IMR-90 (cell line): ENCODE measurements at regions of chr10 and their contacts with region 1.

Region 1: DNA sequence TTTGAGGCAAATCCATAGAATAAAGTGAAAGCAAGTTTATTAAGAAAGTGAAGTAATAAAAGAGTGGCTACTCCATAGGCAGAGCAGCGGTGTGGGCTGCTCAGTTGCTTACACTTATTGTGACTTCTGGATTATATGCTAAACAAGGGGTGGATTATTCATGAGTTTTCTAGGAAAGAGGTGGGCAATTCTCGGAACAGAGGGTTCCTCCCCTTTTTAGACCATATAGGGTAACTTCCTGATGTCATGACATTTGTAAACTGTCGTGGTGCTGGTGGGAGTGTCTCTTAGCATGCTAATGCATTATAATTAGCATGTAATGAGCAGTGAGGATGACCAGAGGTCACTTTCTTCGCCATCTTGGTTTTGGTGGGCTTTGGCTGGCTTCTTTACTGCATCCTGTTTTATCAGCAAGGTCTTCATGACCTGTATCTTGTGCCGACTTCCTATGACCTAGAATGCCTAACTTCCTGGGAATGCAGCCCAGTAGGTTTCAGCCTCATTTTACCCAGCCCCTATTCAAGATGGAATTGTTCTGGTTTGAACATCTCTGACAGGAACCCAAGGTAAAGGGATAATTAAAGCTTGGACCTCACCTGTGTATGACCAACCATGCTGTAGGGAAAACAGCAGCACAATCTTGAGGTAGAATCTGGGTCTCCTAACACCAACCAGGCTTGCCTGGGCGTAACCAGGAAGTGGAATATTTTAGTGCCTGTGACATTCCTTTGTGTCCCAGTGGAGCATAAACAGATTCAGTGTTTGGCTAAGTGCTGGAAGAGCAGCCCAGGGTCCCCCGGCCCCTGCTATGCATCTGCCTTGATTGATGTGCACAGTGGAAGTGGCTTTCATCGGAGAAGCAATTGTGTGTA is 93.9 kb downstream of the PFKFB3 start:
- DNase-seq: no peak
- ATAC-seq: no peak
- H3K4me3 ChIP-seq: no peak overlapping the region
- H3K27ac ChIP-seq: no peak overlapping the region
- H3K4me1 ChIP-seq: peaks cover 7% of the 10 kb centered on the region; the same call in 1 of the 2 replicates
- H3K27me3 ChIP-seq: no peaks in the 10 kb centered on the region
- CTCF ChIP-seq: no peak
- POLR2A ChIP-seq: no peak
- RAD21 ChIP-seq: no peak

Region 2: GRCh38 chr10:4947635-4948596 is 1348.7 kb before region 1 on chr10:
- CTCF ChIA-PET with region 1: no interaction called
- POLR2A ChIA-PET with region 1: interaction called, 22 read pairs
- dilution Hi-C with region 1: no loop called
- in situ Hi-C with region 1: no loop called
- intact Hi-C with region 1: no loop called
- DNase-seq: peak; percentile 97
- ATAC-seq: peak; percentile 80
- H3K4me3 ChIP-seq: no peak overlapping the region
- H3K27ac ChIP-seq: peak overlapping the region; percentile 94
- H3K4me1 ChIP-seq: peaks cover 22% of the 10 kb centered on the region
- H3K27me3 ChIP-seq: no peaks in the 10 kb centered on the region
- CTCF ChIP-seq: no peak
- POLR2A ChIP-seq: no peak
- RAD21 ChIP-seq: no peak

Region 3: GRCh38 chr10:6319119-6319518 is 22.5 kb after region 1 on chr10:
- CTCF ChIA-PET with region 1: no interaction called
- POLR2A ChIA-PET with region 1: no interaction called
- dilution Hi-C with region 1: no loop called
- in situ Hi-C with region 1: no loop called
- intact Hi-C with region 1: loop called (anchors 1 kb)
- DNase-seq: no peak
- ATAC-seq: no peak
- H3K4me3 ChIP-seq: no peak overlapping the region
- H3K27ac ChIP-seq: no peak overlapping the region
- H3K4me1 ChIP-seq: peaks cover 7% of the 10 kb centered on the region
- H3K27me3 ChIP-seq: no peaks in the 10 kb centered on the region; the same call in 1 of the 2 replicates
- CTCF ChIP-seq: no peak
- POLR2A ChIP-seq: no peak
- RAD21 ChIP-seq: no peak

Region 4: DNA sequence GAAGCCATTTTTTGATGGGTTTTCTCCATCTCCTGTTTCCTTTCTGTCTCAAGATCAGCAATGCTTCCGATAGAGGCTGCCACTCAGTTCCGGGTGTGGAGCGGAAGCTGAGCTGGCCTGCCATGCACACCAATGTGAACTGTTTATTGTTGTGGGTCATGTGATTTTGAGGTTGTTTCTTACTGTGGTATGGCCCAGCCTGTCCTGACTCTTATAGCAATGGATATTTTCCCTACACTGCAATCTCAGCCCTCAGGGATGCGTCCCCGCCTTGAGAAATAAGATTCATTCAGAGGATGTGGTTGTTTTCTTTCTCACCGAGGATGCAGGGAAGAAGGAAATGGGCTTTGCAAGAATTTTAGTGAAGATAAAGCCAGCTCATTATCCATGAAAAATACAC is 40.7 kb after region 1 on chr10:
- CTCF ChIA-PET with region 1: no interaction called
- POLR2A ChIA-PET with region 1: no interaction called
- dilution Hi-C with region 1: no loop called
- in situ Hi-C with region 1: no loop called
- intact Hi-C with region 1: no loop called
- DNase-seq: no peak
- ATAC-seq: peak; percentile 29
- H3K4me3 ChIP-seq: no peak overlapping the region
- H3K27ac ChIP-seq: no peak overlapping the region
- H3K4me1 ChIP-seq: no peaks in the 10 kb centered on the region
- H3K27me3 ChIP-seq: no peaks in the 10 kb centered on the region
- CTCF ChIP-seq: no peak
- POLR2A ChIP-seq: no peak
- RAD21 ChIP-seq: no peak

Region 5: GRCh38 chr10:6364893-6365292 is 68.2 kb after region 1 on chr10:
- CTCF ChIA-PET with region 1: no interaction called
- POLR2A ChIA-PET with region 1: no interaction called
- dilution Hi-C with region 1: no loop called
- in situ Hi-C with region 1: no loop called
- intact Hi-C with region 1: no loop called
- DNase-seq: no peak
- ATAC-seq: peak; percentile 59; the same call in 1 of the 2 replicates
- H3K4me3 ChIP-seq: no peak overlapping the region
- H3K27ac ChIP-seq: no peak overlapping the region; the same call in 1 of the 2 replicates
- H3K4me1 ChIP-seq: peaks cover 3% of the 10 kb centered on the region
- H3K27me3 ChIP-seq: peaks cover 2% of the 10 kb centered on the region; the same call in 1 of the 2 replicates
- CTCF ChIP-seq: no peak
- POLR2A ChIP-seq: no peak
- RAD21 ChIP-seq: no peak

Region 6: GRCh38 chr10:6385396-6386062 is 88.9 kb after region 1 on chr10:
- CTCF ChIA-PET with region 1: no interaction called
- POLR2A ChIA-PET with region 1: no interaction called
- dilution Hi-C with region 1: no loop called
- in situ Hi-C with region 1: no loop called
- intact Hi-C with region 1: no loop called
- DNase-seq: peak; percentile 63
- ATAC-seq: peak; percentile 46
- H3K4me3 ChIP-seq: no peak overlapping the region
- H3K27ac ChIP-seq: no peak overlapping the region
- H3K4me1 ChIP-seq: peaks cover 21% of the 10 kb centered on the region
- H3K27me3 ChIP-seq: no peaks in the 10 kb centered on the region
- CTCF ChIP-seq: no peak
- POLR2A ChIP-seq: no peak
- RAD21 ChIP-seq: no peak

Region 7: GRCh38 chr10:6478722-6479121 is 182.1 kb after region 1 on chr10:
- CTCF ChIA-PET with region 1: no interaction called
- POLR2A ChIA-PET with region 1: no interaction called
- dilution Hi-C with region 1: no loop called
- in situ Hi-C with region 1: no loop called
- intact Hi-C with region 1: no loop called
- DNase-seq: no peak
- ATAC-seq: no peak
- H3K4me3 ChIP-seq: no peak overlapping the region
- H3K27ac ChIP-seq: no peak overlapping the region
- H3K4me1 ChIP-seq: no peaks in the 10 kb centered on the region
- H3K27me3 ChIP-seq: no peaks in the 10 kb centered on the region
- CTCF ChIP-seq: no peak
- POLR2A ChIP-seq: no peak
- RAD21 ChIP-seq: no peak